HEK293T (cell line): ENCODE measurements at regions of chr12 and their contacts with region 1.

Region 1: GRCh38 chr12:22459838-22460490 is 84.4 kb downstream of the C2CD5 start:
- DNase-seq: peak; percentile 40

Region 2: DNA sequence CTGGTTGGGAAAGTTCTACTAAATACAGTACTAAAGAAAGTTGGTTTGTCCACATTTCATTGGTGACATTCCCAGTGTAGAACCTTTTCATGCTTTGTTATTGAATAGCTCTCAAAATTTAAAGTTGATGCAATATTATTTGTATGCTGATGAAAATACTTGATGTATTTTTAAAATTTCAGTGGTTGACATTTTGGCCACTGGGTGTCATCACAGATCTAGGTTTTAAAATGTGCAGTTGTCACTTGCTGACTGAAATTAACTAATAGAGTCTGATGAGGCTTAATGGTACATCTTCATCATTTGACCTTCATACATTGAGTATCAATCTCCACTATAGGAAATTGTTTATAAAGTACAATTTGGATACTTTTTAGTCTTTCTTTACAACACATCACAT is 376.8 kb before region 1 on chr12:
- CTCF ChIA-PET with region 1: interaction called, 11 read pairs
- POLR2A ChIA-PET with region 1: no interaction called
- DNase-seq: no peak

Region 3: GRCh38 chr12:22437031-22437780 is 22.8 kb before region 1 on chr12:
- CTCF ChIA-PET with region 1: no interaction called
- POLR2A ChIA-PET with region 1: no interaction called
- DNase-seq: no peak

Region 4: DNA sequence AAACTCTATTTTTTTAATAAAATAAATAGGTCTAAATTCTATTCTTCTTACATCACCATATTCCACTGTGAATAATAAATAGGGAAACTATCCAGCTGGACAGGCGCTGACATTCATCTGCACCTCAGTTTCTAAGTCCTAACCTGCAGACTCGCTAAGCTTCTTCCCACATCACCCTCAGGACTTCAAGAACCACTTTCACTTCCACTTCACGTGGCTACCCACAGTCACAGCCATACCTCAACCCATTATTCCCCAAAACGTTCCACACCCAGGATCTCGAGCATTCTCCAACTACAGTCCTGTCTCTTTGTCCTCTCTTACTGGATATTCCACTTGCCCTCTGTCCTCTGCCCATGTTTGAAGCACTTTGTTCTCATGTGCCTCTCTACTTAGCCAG is 13.2 kb after region 1 on chr12:
- CTCF ChIA-PET with region 1: interaction called, 14 read pairs
- POLR2A ChIA-PET with region 1: no interaction called
- DNase-seq: no peak

Region 5: GRCh38 chr12:22494319-22494718 is 34.4 kb after region 1 on chr12:
- CTCF ChIA-PET with region 1: no interaction called
- POLR2A ChIA-PET with region 1: no interaction called
- DNase-seq: no peak

Region 6: DNA sequence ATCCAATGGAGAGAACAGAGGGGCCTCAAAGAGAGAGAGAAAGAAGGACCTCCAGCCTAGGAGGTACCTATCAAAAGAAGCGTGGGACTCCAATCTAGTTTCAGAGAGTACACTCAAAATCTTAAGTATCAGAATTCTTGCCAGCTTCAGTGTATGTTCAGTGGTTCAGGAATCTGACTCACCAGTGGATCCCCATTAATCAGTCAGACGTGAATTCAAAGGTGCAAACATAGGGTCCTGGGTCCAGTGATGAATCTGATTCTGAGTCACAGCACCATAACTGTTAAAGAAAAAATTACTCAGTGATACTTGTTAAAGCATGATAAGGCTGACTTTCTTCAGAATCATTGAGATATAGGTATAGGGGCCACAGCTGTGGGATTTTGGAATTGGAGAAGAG is 198.2 kb after region 1 on chr12:
- CTCF ChIA-PET with region 1: no interaction called
- POLR2A ChIA-PET with region 1: no interaction called
- DNase-seq: no peak

Region 7: DNA sequence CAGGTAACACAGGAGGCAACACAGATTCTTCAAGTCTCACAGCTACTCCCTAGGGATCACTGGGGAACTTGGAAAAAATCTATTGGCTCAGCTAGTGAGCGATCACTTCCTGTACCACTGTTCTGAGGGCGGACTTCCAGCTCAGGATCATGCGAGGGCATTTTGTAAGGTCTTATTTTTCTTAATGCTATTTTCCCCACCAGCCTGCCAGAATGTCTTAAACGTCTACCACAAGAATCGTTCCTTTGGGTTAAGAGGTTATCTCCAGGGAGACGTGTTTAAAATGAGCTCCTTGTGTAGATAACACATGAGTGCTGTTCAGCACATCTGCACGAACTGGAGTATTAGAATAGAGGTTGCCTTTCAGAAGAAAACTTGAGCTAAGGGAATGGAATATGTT is 327.6 kb after region 1 on chr12:
- CTCF ChIA-PET with region 1: no interaction called
- POLR2A ChIA-PET with region 1: no interaction called
- DNase-seq: no peak